ENCODE measurements at regions of chr6 and their contacts with region 1.

Region 1: GRCh38 chr6:35552285-35552917 is 39.7 kb upstream of the TULP1 start:
- DNase-seq: peak; percentile 31 to 78 (median 61)
- ATAC-seq: peak; percentile 86
- H3K4me3 ChIP-seq: no peak overlapping the region
- H3K4me3 Mint-ChIP-seq: no peak overlapping the region
- H3K27ac ChIP-seq: no peak overlapping the region
- H3K27ac Mint-ChIP-seq: no peak overlapping the region
- H3K4me1 ChIP-seq: no peaks in the 10 kb centered on the region
- H3K4me1 Mint-ChIP-seq: peaks cover 4% of the 10 kb centered on the region
- H3K27me3 ChIP-seq: no peaks in the 10 kb centered on the region
- H3K27me3 Mint-ChIP-seq: peaks cover 2% of the 10 kb centered on the region
- CTCF ChIP-seq: peak; percentile 95

Region 2: DNA sequence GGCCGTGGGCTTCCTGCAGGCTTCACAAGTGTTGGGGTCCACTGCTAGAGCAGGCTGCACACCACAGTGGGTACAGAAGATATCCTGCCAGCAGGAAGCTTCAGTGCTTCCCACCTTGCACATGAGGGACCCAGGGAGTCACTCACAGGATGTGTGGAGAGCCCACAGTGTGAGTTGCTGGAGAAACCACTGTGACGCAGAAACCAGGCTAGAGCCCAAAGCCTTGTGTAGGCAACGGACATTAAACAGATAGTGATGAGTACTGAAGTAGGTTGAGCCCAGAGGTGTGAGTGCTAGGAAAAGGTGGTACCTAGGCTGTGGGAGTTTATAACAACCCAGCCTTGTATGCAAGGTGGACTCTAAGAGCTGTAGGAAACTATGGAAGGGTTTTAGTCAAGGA is 273.7 kb before region 1 on chr6:
- CTCF ChIA-PET with region 1: no interaction called
- POLR2A ChIA-PET with region 1: no interaction called
- intact Hi-C with region 1: no loop called
- DNase-seq: no peak
- ATAC-seq: no peak
- H3K4me3 ChIP-seq: no peak overlapping the region
- H3K4me3 Mint-ChIP-seq: no peak overlapping the region
- H3K27ac ChIP-seq: no peak overlapping the region
- H3K27ac Mint-ChIP-seq: no peak overlapping the region
- H3K4me1 ChIP-seq: no peaks in the 10 kb centered on the region
- H3K4me1 Mint-ChIP-seq: peaks cover 14% of the 10 kb centered on the region
- H3K27me3 ChIP-seq: no peaks in the 10 kb centered on the region
- H3K27me3 Mint-ChIP-seq: no peaks in the 10 kb centered on the region
- CTCF ChIP-seq: no peak

Region 3: DNA sequence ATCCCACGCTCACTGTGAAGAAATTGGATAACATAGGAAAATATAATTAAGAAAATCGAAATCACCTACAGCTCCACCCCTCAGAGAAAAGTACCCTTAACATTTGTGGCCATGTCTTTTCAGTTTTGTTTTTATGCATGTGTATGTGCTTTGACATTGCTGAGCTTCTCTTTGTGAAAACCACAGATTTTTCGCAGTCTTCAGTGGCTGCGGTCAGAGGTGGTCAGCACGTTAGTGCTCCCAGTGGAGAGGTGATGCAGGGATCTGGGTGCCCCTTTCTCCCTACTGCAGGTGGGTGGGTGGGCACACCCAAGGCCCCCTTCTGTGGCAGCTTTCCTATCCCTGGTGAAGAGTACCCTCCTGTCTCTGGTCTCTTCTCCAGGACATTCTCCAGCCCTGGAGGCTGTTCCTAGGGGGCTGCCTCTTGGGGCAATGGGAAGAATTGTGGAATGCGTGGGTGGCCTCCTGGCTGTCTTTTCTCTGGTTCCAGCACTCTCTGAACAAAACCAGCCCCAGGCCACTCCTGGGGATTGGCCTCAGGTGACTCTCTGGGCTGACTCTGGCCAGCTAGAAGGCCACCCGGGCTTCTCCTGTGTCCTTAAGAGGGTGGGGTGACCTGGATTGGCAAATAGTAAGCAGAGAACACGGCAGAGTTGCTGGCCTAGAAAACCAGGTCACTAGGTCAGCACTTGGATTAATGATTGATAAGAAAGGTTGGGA is 150.1 kb before region 1 on chr6:
- CTCF ChIA-PET with region 1: no interaction called
- POLR2A ChIA-PET with region 1: no interaction called
- intact Hi-C with region 1: no loop called
- DNase-seq: no peak
- ATAC-seq: no peak
- H3K4me3 ChIP-seq: no peak overlapping the region
- H3K4me3 Mint-ChIP-seq: no peak overlapping the region
- H3K27ac ChIP-seq: no peak overlapping the region
- H3K27ac Mint-ChIP-seq: peak overlapping the region; percentile 60
- H3K4me1 ChIP-seq: no peaks in the 10 kb centered on the region
- H3K4me1 Mint-ChIP-seq: peaks cover 15% of the 10 kb centered on the region
- H3K27me3 ChIP-seq: no peaks in the 10 kb centered on the region
- H3K27me3 Mint-ChIP-seq: no peaks in the 10 kb centered on the region
- CTCF ChIP-seq: no peak

Region 4: GRCh38 chr6:35516642-35517041 is 35.8 kb before region 1 on chr6:
- CTCF ChIA-PET with region 1: interaction called, 71 read pairs
- POLR2A ChIA-PET with region 1: no interaction called
- intact Hi-C with region 1: no loop called
- DNase-seq: no peak
- ATAC-seq: no peak
- H3K4me3 ChIP-seq: no peak overlapping the region
- H3K4me3 Mint-ChIP-seq: no peak overlapping the region
- H3K27ac ChIP-seq: no peak overlapping the region
- H3K27ac Mint-ChIP-seq: no peak overlapping the region
- H3K4me1 ChIP-seq: peaks cover under 1% of the 10 kb centered on the region
- H3K4me1 Mint-ChIP-seq: peaks cover 3% of the 10 kb centered on the region
- H3K27me3 ChIP-seq: peaks cover 0 to 6% of the 10 kb centered on the region in 2 experiments
- H3K27me3 Mint-ChIP-seq: no peaks in the 10 kb centered on the region
- CTCF ChIP-seq: no peak

Region 5: DNA sequence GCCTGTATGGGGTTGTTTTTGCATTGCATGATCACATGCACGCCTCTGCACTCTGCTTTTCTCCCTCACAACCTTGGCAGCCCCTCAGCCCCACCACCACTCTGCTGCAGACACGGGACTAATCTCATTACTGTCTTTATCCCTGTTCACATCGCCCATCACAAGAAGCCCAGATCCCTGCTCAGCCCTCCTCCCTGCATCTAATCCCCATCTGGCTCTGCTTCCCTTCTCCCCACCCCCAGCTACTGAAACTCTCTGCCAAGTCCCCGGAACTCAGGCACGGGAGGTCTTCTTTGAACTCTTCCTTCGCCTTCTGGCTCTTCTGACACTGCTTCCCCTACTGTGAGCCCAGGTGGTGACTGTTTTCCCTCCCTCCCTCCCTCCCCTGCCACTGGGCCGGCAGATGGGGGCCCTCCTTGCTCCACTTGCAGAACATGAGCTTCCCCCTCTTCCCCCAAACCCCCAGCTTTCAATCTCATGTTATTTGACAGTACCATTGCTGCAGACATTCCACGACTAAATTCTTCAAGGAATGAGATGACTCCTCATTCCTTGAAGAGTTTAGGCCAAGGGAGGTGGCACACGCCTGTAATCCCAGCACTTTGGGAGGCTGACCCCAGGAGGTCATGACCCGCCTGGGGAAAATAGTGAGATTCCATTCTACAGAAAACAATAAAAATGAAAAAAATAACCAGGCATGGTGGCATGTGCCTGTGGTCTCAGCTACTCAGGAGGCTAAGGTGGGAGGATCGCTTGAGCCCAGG is 17.8 kb before region 1 on chr6:
- CTCF ChIA-PET with region 1: interaction called, 18 read pairs
- POLR2A ChIA-PET with region 1: interaction called, 3 read pairs
- intact Hi-C with region 1: no loop called
- DNase-seq: no peak
- ATAC-seq: no peak
- H3K4me3 ChIP-seq: no peak overlapping the region
- H3K4me3 Mint-ChIP-seq: no peak overlapping the region
- H3K27ac ChIP-seq: no peak overlapping the region
- H3K27ac Mint-ChIP-seq: no peak overlapping the region
- H3K4me1 ChIP-seq: no peaks in the 10 kb centered on the region
- H3K4me1 Mint-ChIP-seq: peaks cover 7% of the 10 kb centered on the region
- H3K27me3 ChIP-seq: no peaks in the 10 kb centered on the region
- H3K27me3 Mint-ChIP-seq: peaks cover 3% of the 10 kb centered on the region
- CTCF ChIP-seq: no peak

Region 6: DNA sequence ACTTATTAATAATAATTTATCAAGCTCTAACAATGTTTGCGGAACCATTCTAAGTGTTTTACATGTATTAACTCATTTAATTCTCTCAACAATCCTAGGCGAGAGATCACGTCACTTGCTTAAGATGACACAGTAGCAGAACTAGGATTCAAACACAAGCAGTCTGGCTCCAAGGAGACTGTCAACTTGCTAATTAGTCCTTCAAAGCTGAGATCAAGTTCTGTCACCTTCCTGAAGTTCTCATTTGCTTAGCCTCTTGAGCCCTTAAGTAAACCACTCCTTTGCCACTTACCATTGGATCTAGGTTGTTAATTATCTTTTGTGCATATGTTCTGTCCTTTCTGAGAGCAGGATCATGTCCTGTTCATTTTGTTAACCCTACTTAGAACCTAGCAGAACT is 122.2 kb after region 1 on chr6:
- CTCF ChIA-PET with region 1: no interaction called
- POLR2A ChIA-PET with region 1: no interaction called
- intact Hi-C with region 1: no loop called
- DNase-seq: no peak
- ATAC-seq: no peak
- H3K4me3 ChIP-seq: no peak overlapping the region
- H3K4me3 Mint-ChIP-seq: no peak overlapping the region
- H3K27ac ChIP-seq: peak overlapping the region in 1 of 2 experiments; percentile 57
- H3K27ac Mint-ChIP-seq: peak overlapping the region; percentile 89
- H3K4me1 ChIP-seq: peaks cover 73% of the 10 kb centered on the region
- H3K4me1 Mint-ChIP-seq: peaks cover 73% of the 10 kb centered on the region
- H3K27me3 ChIP-seq: no peaks in the 10 kb centered on the region
- H3K27me3 Mint-ChIP-seq: no peaks in the 10 kb centered on the region
- CTCF ChIP-seq: no peak

Measured in CD8-positive, alpha-beta T cell (primary cell).